ENCODE measurements at regions of chr5 and their contacts with region 1.

Region 1: DNA sequence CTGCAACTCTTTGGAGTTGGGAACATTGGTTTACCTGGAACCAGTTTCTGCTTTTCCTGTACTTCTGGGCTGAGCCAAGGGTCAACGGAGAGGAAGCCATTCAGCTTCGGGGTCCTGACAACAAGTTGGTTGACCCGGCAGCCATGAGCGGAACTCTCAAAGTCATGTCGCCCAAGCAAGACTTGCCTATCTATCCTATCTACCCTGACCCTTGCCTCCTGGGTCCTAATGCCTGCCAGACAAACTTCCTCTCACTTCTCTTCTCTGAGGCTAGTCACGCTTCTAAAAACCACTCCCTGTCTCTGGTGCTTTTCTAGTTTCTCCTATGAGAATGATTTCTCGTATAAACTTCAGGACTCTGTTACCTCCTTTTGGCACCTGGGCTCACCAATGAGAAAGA is 44.7 kb upstream of the CRHBP start:
- DNase-seq: no peak
- H3K4me3 ChIP-seq: no peak overlapping the region
- CTCF ChIP-seq: no peak

Region 2: GRCh38 chr5:76855961-76856360 is 52.2 kb before region 1 on chr5:
- in situ Hi-C with region 1: no loop called
- DNase-seq: no peak
- H3K4me3 ChIP-seq: no peak overlapping the region
- CTCF ChIP-seq: no peak

Region 3: GRCh38 chr5:76958991-76959767 is 51.0 kb after region 1 on chr5:
- in situ Hi-C with region 1: loop called (anchors 5 kb)
- DNase-seq: peak; percentile 83
- H3K4me3 ChIP-seq: no peak overlapping the region
- CTCF ChIP-seq: no peak

Region 4: DNA sequence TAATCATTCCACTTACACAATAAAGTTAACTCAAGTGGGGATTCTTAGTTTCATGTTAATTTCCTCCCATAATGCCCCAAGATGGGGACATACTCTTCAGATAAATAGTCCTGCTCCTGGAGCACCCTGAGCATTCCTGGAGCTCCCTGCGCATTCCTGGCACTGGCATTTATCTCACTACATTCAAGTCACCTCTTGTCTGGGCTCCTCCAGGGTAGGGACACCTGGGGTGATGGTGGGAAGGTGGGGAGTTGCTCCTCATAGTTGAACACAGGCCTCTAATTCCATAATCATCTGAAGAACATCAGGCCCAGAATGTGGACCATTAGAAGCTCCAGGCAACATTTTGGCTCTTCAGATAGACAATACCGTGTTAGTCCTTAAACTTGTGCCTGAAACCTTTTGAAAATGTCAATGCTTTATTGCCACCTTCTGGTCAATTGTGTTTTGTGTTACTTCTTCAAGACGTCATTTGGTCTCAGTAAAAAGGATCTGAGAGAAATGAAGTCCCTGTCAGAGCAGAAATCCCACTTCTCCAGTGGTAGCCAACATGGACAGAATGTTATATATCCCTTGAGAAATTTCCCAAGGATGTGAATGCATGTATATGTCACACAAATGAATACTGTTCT is 107.9 kb after region 1 on chr5:
- in situ Hi-C with region 1: no loop called
- DNase-seq: peak; percentile 80
- H3K4me3 ChIP-seq: no peak overlapping the region
- CTCF ChIP-seq: peak; percentile 41